Colonic mucosa (tissue), 4 donors: ENCODE measurements at regions of chr12 and their contacts with region 1.

Region 1: GRCh38 chr12:85468356-85469157 is 188.5 kb downstream of the ALX1 start:
- DNase-seq: peak; percentile 59
- H3K4me3 ChIP-seq: peak overlapping the region; percentile 21
- H3K27ac ChIP-seq: no peak overlapping the region
- H3K4me1 ChIP-seq: no peaks in the 10 kb centered on the region
- H3K27me3 ChIP-seq: no peaks in the 10 kb centered on the region
- CTCF ChIP-seq: peak; percentile 73

Region 2: DNA sequence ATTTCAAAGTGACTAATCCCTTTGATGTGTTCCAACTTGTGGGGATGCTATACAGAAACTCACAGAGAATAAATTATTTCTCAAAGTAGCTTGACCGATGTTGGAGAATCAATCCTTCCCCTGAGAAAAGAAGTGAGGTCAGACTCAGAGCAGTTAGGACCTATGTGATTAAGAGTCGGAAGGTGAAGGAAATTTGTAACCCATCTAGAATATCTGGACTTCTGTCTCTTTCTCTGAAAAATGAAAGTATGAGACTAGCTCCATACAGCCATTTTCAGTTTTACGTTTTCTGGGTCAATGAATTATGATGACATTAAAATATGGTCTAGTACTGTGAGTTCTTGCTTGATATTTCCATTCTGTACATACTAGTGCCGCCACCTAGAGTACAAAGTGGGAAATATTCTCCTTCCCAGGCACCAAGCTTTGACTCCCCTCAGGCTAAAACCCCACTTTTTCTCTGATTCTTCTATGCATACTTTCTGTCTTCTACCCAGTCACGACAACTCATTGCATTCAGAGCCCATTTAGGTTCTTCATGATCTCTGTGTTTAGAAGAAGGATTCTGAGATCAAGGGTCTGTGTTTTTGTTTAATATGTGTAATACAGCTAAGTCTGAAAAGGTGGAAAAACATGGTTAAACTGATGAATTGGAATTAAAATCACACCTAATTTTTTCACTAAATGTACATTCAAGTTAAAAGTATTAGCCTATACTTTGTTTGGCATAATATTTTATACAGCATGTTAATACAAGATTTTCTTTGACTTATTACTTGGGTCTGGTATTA is 398.6 kb after region 1 on chr12:
- intact Hi-C with region 1: loop called (anchors 5 kb)
- DNase-seq: peak; percentile 41
- H3K4me3 ChIP-seq: no peak overlapping the region
- H3K27ac ChIP-seq: no peak overlapping the region
- H3K4me1 ChIP-seq: no peaks in the 10 kb centered on the region
- H3K27me3 ChIP-seq: no peaks in the 10 kb centered on the region
- CTCF ChIP-seq: peak; percentile 59

Region 3: DNA sequence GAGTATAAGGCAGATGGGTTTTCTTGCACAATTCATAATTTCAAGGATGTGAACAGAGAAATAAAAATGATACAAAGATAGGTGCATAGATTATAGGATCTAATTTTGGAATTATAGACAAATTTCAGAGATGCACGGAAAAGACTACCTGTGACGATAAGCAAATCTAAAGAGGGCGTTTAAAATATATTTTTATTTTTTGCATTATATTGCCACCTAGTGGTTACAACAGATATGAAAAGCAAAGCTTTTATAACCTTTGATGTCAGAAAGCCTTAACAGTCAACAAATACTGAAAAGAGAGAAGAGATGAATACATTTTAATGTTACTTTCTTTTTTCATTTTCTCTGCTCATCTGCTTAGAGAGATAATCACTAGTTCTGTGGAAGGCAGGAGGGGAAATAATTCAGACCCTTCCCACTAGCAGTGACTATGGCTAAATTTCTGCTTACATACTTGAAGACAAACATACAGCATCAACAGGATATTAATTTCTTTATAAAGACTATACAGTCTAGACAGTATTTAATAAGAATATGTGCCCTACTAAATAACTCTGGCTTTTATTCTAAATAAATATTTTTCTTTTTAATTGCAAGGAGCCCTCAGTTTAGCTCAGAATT is 451.9 kb after region 1 on chr12:
- intact Hi-C with region 1: loop called (anchors 5 kb)
- DNase-seq: no peak
- H3K4me3 ChIP-seq: no peak overlapping the region
- H3K27ac ChIP-seq: no peak overlapping the region
- H3K4me1 ChIP-seq: no peaks in the 10 kb centered on the region
- H3K27me3 ChIP-seq: no peaks in the 10 kb centered on the region
- CTCF ChIP-seq: peak; percentile 58